Mammary epithelial cell (primary cell): ENCODE measurements at regions of chr11 and their contacts with region 1.

Region 1: GRCh38 chr11:62841361-62842184 is 2.2 kb upstream of the WDR74 start:
- DNase-seq: peak; percentile 100
- H3K4me3 ChIP-seq: peak overlapping the region in 2 of 3 experiments; percentile 35 to 36
- H3K27ac ChIP-seq: peak overlapping the region; percentile 99
- H3K4me1 ChIP-seq: peaks cover 11% of the 10 kb centered on the region
- H3K27me3 ChIP-seq: no peaks in the 10 kb centered on the region
- CTCF ChIP-seq: no peak

Region 2: GRCh38 chr11:62383822-62384221 is 457.8 kb before region 1 on chr11:
- CTCF ChIA-PET with region 1: no interaction called
- dilution Hi-C with region 1: no loop called
- in situ Hi-C with region 1: loop called in 1 of 2 experiments (anchors 25 kb)
- intact Hi-C with region 1: loop called (anchors 1 kb)
- DNase-seq: no peak
- H3K4me3 ChIP-seq: no peak overlapping the region
- H3K27ac ChIP-seq: no peak overlapping the region
- H3K4me1 ChIP-seq: no peaks in the 10 kb centered on the region
- H3K27me3 ChIP-seq: no peaks in the 10 kb centered on the region
- CTCF ChIP-seq: no peak

Region 3: DNA sequence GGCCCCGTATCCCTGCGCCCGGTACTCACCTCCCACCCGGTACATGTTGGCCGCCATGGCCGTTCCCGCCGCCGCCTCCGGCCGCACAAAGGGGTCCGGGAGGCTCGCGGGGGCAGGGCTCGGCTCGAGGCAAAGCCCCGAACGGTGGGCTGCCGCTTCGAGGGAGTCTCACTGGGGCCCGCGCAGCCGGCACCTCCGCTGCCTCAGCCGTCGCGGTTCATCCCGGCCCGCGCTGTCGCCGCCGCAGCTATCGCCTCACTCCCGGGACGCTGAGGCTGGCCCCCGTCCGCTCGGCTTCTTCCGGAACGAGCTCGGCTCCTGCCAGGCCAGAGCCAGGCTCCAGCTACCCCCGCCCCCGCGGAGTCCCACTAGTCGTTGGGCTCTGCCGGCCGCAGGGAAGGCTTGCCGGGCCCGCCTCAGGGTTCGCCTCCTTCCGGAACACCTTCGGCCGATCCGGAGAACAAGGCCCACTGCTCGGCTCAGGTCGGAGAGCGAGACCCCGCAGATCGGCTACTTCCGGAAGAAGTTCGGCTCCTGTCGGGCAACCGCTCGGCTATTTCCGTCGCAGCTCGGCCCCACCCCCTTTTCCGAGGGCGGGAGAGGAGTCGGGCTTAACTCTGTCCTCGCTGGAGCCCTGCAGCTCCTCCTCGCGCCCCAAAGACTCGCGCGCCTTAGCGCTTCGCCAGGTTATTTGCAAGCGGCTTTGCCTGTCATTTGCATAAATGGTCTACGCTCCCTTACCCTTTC is 240.0 kb before region 1 on chr11 and contains the start of gene MTA2:
- CTCF ChIA-PET with region 1: no interaction called
- dilution Hi-C with region 1: no loop called
- in situ Hi-C with region 1: no loop called
- intact Hi-C with region 1: loop called (anchors 5 kb)
- DNase-seq: peak; percentile 99
- H3K4me3 ChIP-seq: peak within 1 kb of the TSS; percentile 68 to 88 (median 78)
- H3K27ac ChIP-seq: peak within 1 kb of the TSS; percentile 66
- H3K4me1 ChIP-seq: peaks cover 30% of the 10 kb centered on the region
- H3K27me3 ChIP-seq: no peaks in the 10 kb centered on the region
- CTCF ChIP-seq: no peak
- total RNA-seq, gene MTA2: 157 to 169 TPM

Region 4: DNA sequence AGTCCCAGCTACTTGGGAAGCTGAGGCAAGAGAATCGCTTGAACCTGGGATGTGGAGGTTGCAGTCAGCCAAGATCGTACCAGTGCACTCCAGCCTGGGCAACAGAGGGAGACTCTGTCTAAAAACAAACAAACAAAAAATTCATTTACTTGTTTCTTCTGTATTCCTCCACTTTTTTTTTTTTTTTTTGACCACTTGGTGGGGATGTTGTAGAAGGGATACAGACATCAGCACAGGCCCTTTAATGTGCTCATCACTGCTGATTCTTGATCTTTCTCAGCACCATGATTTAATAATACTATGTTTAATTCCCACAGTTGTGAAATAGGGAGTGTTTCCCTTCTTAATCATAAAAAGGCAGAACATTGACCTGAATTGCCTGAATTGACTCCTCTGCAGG is 108.8 kb before region 1 on chr11:
- CTCF ChIA-PET with region 1: no interaction called
- dilution Hi-C with region 1: no loop called
- in situ Hi-C with region 1: no loop called
- intact Hi-C with region 1: loop called (anchors 1 kb)
- DNase-seq: peak; percentile 41
- H3K4me3 ChIP-seq: no peak overlapping the region
- H3K27ac ChIP-seq: no peak overlapping the region
- H3K4me1 ChIP-seq: no peaks in the 10 kb centered on the region
- H3K27me3 ChIP-seq: no peaks in the 10 kb centered on the region
- CTCF ChIP-seq: no peak

Region 5: DNA sequence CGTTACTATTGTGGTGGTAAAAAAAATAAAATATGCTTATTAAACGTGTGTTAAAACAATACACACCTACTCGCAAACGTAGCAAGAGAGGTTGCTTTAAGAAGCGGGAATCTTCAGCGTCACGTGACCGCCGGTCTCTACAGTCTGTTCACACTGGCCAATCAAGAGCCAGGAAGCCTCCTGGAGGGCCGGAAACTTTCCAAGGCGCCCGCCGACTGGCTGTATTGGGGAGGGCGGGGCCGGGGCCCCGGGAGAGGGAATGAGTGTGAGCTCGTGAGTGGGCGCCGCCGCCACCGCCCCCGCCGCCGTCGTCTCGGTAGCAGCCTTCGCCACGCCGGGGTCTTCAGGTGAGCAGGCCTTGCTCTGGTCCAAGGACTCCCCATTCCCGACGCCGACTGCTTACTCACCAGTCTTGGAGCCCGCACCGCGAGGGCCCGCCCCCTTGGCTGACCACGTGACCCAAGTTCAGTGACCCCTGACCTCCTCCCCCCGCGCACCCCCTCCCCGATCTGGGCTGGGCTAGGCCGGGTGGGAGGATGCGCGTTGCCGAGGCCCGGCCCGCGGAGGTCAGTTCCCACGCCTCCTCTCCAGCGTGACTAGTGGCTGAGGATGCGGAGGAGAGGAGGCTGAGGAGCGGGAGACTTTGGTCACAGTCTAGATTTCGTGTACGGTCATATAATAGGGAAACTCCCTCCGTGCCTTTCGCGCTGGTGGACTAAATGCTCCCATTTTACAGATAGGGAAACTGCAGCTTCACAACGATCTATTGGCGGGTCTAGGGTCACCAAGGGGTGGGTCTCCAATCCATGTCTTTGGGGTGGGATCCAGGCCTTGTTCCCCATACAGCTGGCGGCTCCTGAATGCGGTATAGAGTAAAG is 70.2 kb before region 1 on chr11 and contains the start of gene TAF6L:
- CTCF ChIA-PET with region 1: no interaction called
- dilution Hi-C with region 1: loop called (anchors 5 kb)
- in situ Hi-C with region 1: no loop called
- intact Hi-C with region 1: no loop called
- DNase-seq: peak; percentile 96
- H3K4me3 ChIP-seq: peak within 1 kb of the TSS; percentile 33 to 93 (median 55)
- H3K27ac ChIP-seq: peak within 1 kb of the TSS; percentile 53
- H3K4me1 ChIP-seq: peaks cover 16% of the 10 kb centered on the region
- H3K27me3 ChIP-seq: no peaks in the 10 kb centered on the region
- CTCF ChIP-seq: no peak
- total RNA-seq, gene TAF6L: 16.3 to 22.0 TPM

Region 6: GRCh38 chr11:62805076-62805892 is 36.3 kb before region 1 on chr11 and contains the start of gene NXF1:
- CTCF ChIA-PET with region 1: no interaction called
- dilution Hi-C with region 1: no loop called
- in situ Hi-C with region 1: no loop called
- intact Hi-C with region 1: loop called (anchors 1 kb)
- DNase-seq: peak; percentile 92
- H3K4me3 ChIP-seq: peak within 1 kb of the TSS; percentile 73 to 85 (median 76)
- H3K27ac ChIP-seq: peak within 1 kb of the TSS; percentile 77
- H3K4me1 ChIP-seq: peaks cover 12% of the 10 kb centered on the region
- H3K27me3 ChIP-seq: no peaks in the 10 kb centered on the region
- CTCF ChIP-seq: no peak
- total RNA-seq, gene NXF1: 24.3 to 43.4 TPM

Region 7: DNA sequence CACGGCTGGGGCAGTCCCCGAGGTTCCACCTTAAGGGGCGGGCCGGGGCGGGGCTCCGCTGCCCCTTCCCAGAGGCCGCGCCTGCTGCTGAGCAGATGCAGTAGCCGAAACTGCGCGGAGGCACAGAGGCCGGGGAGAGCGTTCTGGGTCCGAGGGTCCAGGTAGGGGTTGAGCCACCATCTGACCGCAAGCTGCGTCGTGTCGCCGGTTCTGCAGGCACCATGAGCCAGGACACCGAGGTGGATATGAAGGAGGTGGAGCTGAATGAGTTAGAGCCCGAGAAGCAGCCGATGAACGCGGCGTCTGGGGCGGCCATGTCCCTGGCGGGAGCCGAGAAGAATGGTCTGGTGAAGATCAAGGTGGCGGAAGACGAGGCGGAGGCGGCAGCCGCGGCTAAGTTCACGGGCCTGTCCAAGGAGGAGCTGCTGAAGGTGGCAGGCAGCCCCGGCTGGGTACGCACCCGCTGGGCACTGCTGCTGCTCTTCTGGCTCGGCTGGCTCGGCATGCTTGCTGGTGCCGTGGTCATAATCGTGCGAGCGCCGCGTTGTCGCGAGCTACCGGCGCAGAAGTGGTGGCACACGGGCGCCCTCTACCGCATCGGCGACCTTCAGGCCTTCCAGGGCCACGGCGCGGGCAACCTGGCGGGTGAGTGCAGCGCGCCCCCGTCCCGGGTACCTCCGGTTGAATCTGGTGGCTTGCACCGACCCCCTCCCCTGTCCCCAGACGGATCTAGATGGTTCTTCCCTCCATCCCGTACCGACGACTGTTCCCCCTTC is 39.4 kb after region 1 on chr11 and contains the start of gene SLC3A2:
- CTCF ChIA-PET with region 1: no interaction called
- dilution Hi-C with region 1: no loop called
- in situ Hi-C with region 1: no loop called
- intact Hi-C with region 1: loop called (anchors 1 kb)
- DNase-seq: peak; percentile 88
- H3K4me3 ChIP-seq: peak within 1 kb of the TSS; percentile 90 to 96 (median 91)
- H3K27ac ChIP-seq: peak within 1 kb of the TSS; percentile 99
- H3K4me1 ChIP-seq: peaks cover 41% of the 10 kb centered on the region
- H3K27me3 ChIP-seq: no peaks in the 10 kb centered on the region
- CTCF ChIP-seq: peak; percentile 32 to 72
- total RNA-seq, gene SLC3A2: 1,418 to 1,465 TPM